Sigmoid colon (tissue), 7 donors: ENCODE measurements at regions of chr20 and their contacts with region 1.

Region 1: GRCh38 chr20:63707549-63708300 is at the starts of genes ARFRP1 and ZGPAT:
- DNase-seq: peak; percentile 94
- H3K4me3 ChIP-seq: peak within 1 kb of the TSS; percentile 60 to 92 (median 78)
- H3K27ac ChIP-seq: peak within 1 kb of the TSS; percentile 87 to 93 (median 91)
- H3K4me1 ChIP-seq: peaks cover 0 to 29% (median 25%) of the 10 kb centered on the region in 4 donors
- H3K27me3 ChIP-seq: no peaks in the 10 kb centered on the region
- CTCF ChIP-seq: peak in 1 of 4 experiments; percentile 3
- EP300 ChIP-seq: peak in 1 of 4 donors; percentile 26
- POLR2A ChIP-seq: peak in 1 of 2 donors; percentile 11
- total RNA-seq, gene ARFRP1: 26.8 to 38.7 (median 28.8) TPM
- total RNA-seq, gene ZGPAT: 18.5 to 22.5 (median 19.6) TPM

Region 2: GRCh38 chr20:63739130-63740069 is 31.7 kb after region 1 on chr20 and contains the start of gene SLC2A4RG:
- intact Hi-C with region 1: loop called (anchors 2 kb)
- DNase-seq: peak; percentile 89
- H3K4me3 ChIP-seq: peak within 1 kb of the TSS; percentile 65 to 71 (median 66)
- H3K27ac ChIP-seq: peak within 1 kb of the TSS; percentile 91 to 96 (median 96)
- H3K4me1 ChIP-seq: peaks cover 0 to 43% (median 36%) of the 10 kb centered on the region in 4 donors
- H3K27me3 ChIP-seq: peaks cover 0 to 10% (median 0%) of the 10 kb centered on the region in 3 donors
- CTCF ChIP-seq: no peak
- EP300 ChIP-seq: no peak
- POLR2A ChIP-seq: no peak
- total RNA-seq, gene SLC2A4RG: 25.2 to 78.2 (median 54.5) TPM